Activated CD4-positive, alpha-beta T cell treated with anti-CD3 and anti-CD28 coated beads, Interleukin-2, amount 10 ng/mL, durations not matched to agents 24 days and 14 days (primary cell): ENCODE measurements at regions of chr3 and their contacts with region 1.

Region 1: DNA sequence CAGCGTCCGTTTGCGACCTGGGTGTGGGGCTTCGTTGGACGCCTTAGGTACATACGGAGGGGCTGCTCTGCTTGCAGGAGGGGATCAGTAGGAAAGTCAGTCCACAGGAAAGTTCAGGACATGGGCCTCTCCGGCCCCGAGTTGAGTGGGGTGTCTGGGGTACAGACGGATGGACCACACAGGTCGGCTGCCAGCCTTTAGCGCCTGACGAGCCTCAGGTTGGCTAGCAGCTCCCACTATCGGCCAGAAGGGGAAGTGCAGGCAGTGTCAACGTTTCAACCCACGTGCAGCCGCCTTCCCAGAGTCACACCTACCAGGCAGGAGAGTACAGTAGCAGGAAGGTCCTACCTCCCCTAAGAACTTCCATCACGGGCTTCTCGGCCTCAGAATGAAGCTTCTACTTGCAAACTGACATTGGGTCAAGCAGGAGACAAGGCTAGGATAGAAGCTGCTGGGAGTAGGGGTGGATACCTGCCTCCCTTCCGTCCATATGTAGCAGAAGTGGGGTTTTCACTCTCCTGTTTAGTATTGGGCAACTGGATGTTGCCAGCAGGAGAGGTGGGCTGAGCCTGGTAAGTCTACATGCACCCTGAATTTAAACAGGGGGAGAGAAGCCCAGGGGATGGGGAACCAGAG is 1.8 kb upstream of the SCN5A start:
- DNase-seq: peak; percentile 92
- H3K4me3 Mint-ChIP-seq: no peak overlapping the region
- H3K27ac Mint-ChIP-seq: no peak overlapping the region
- H3K4me1 Mint-ChIP-seq: peaks cover 5% of the 10 kb centered on the region
- H3K27me3 Mint-ChIP-seq: peaks cover 17% of the 10 kb centered on the region

Region 2: GRCh38 chr3:38496131-38496910 is 155.0 kb before region 1 on chr3 and contains the start of gene EXOG:
- intact Hi-C with region 1: loop called (anchors 1 kb)
- DNase-seq: peak; percentile 97
- H3K4me3 Mint-ChIP-seq: peak within 1 kb of the TSS; percentile 99
- H3K27ac Mint-ChIP-seq: peak within 1 kb of the TSS; percentile 86
- H3K4me1 Mint-ChIP-seq: peaks cover 23% of the 10 kb centered on the region
- H3K27me3 Mint-ChIP-seq: no peaks in the 10 kb centered on the region
- total RNA-seq, gene EXOG: 18.0 and 20.8 TPM in 2 replicates

Region 3: GRCh38 chr3:38521391-38521987 is 129.8 kb before region 1 on chr3:
- intact Hi-C with region 1: loop called (anchors 1 kb)
- DNase-seq: peak; percentile 87
- H3K4me3 Mint-ChIP-seq: no peak overlapping the region
- H3K27ac Mint-ChIP-seq: no peak overlapping the region
- H3K4me1 Mint-ChIP-seq: peaks cover 25% of the 10 kb centered on the region
- H3K27me3 Mint-ChIP-seq: no peaks in the 10 kb centered on the region

Region 4: DNA sequence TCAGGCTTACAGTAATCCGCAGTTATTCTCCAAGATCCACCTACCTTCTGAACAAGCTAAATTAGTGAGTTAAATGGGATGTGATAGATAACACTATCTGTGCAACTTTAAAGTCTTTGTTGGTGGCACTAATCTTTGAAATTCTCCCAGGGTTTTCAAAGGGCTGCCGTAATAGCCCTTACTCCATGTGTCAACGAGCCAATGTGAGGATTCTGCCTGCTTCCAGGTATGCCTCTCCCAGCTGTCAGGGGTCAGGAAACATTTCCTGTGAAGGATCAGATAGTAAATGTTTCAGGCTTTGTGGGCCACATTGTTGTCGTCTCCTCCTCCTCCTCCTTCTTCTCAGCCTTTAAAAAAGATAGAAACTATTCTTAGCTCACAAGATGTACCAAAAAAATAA is 18.4 kb after region 1 on chr3:
- intact Hi-C with region 1: no loop called
- DNase-seq: no peak
- H3K4me3 Mint-ChIP-seq: no peak overlapping the region
- H3K27ac Mint-ChIP-seq: no peak overlapping the region
- H3K4me1 Mint-ChIP-seq: no peaks in the 10 kb centered on the region
- H3K27me3 Mint-ChIP-seq: peaks cover 39% of the 10 kb centered on the region

Region 5: GRCh38 chr3:39000008-39000450 is 348.8 kb after region 1 on chr3:
- intact Hi-C with region 1: loop called (anchors 5 kb)
- DNase-seq: peak; percentile 62
- H3K4me3 Mint-ChIP-seq: no peak overlapping the region
- H3K27ac Mint-ChIP-seq: no peak overlapping the region
- H3K4me1 Mint-ChIP-seq: no peaks in the 10 kb centered on the region
- H3K27me3 Mint-ChIP-seq: peaks cover 17% of the 10 kb centered on the region